CD4-positive, alpha-beta memory T cell (primary cell): ENCODE measurements at regions of chr1 and their contacts with region 1.

Region 1: GRCh38 chr1:44786138-44786840 is 1.7 kb downstream of the BEST4 start:
- DNase-seq: peak; percentile 72 to 84 (median 80)
- H3K4me3 ChIP-seq: peak overlapping the region; percentile 52 to 68
- H3K4me3 Mint-ChIP-seq: peak overlapping the region; percentile 73 to 83 (median 80)
- H3K27ac ChIP-seq: peak overlapping the region; percentile 53
- H3K27ac Mint-ChIP-seq: peak overlapping the region; percentile 41 to 95 (median 88)
- H3K4me1 ChIP-seq: peaks cover 39% of the 10 kb centered on the region
- H3K4me1 Mint-ChIP-seq: peaks cover 22 to 37% (median 28%) of the 10 kb centered on the region in 4 donors
- H3K27me3 ChIP-seq: no peaks in the 10 kb centered on the region
- H3K27me3 Mint-ChIP-seq: no peaks in the 10 kb centered on the region

Region 2: DNA sequence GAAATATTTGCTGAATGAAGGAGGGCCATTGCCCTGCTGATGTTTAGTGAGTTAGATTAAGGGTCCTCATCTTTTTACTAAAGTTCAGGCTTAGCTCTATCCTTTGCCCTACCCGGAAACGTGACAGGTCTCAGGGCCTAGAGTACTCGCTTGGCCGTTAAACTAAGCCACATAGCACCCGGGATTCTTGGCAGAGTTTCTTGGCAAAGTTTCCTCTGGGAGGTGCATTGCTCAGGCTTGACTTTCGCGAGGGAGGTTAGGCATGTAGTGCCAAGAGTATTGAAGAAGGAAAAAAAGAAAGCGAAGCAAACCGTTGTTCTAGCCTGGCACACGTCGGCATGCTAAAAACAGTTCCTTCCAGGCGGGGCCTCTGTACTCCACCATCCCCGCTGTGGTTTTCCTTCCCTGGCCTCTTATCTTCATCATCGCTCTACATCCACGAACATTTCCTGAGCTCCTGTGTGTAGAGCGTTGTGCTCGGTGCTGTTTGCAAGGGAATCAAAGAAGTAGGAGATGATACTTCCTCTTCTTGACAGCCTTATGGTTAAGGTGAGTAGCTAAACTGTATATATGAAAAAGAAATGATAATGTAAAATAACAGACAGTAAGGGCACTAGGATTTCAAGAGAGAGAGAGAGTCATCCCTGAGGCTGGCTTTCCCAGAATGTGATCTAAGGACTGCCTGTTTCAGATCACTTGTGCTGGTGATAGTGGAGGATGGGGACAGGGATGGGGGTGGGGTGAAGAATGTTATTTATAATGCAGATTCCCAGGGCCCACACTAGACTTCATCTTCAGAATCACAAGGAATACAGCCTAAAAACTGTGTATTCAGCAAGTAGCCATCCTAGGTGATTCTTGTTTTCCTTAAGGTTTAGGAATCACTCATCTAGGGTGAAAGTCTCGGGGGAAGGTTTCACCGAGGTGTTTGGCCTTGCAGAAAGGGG is 362.4 kb before region 1 on chr1:
- CTCF ChIA-PET with region 1: no interaction called
- POLR2A ChIA-PET with region 1: no interaction called
- intact Hi-C with region 1: no loop called
- DNase-seq: no peak
- H3K4me3 ChIP-seq: no peak overlapping the region
- H3K4me3 Mint-ChIP-seq: peak overlapping the region in 2 of 8 donors; percentile 23 to 49
- H3K27ac ChIP-seq: no peak overlapping the region
- H3K27ac Mint-ChIP-seq: peak overlapping the region in 1 of 7 donors; percentile 88
- H3K4me1 ChIP-seq: no peaks in the 10 kb centered on the region
- H3K4me1 Mint-ChIP-seq: peaks cover 0 to 6% (median 5%) of the 10 kb centered on the region in 4 donors
- H3K27me3 ChIP-seq: peaks cover 7% of the 10 kb centered on the region
- H3K27me3 Mint-ChIP-seq: peaks cover 50 to 62% of the 10 kb centered on the region in 2 donors

Region 3: GRCh38 chr1:44799770-44800584 is 13.7 kb after region 1 on chr1 and contains the start of gene PLK3:
- CTCF ChIA-PET with region 1: interaction called, 10 read pairs
- POLR2A ChIA-PET with region 1: interaction called, 51 read pairs
- intact Hi-C with region 1: no loop called
- DNase-seq: peak; percentile 99 to 100 (median 99)
- H3K4me3 ChIP-seq: peak within 1 kb of the TSS; percentile 77 to 83
- H3K4me3 Mint-ChIP-seq: peak within 1 kb of the TSS; percentile 89 to 99 (median 96)
- H3K27ac ChIP-seq: peak within 1 kb of the TSS; percentile 96
- H3K27ac Mint-ChIP-seq: peak within 1 kb of the TSS; percentile 82 to 100 (median 99)
- H3K4me1 ChIP-seq: peaks cover 37% of the 10 kb centered on the region
- H3K4me1 Mint-ChIP-seq: peaks cover 23 to 48% (median 31%) of the 10 kb centered on the region in 4 donors
- H3K27me3 ChIP-seq: no peaks in the 10 kb centered on the region
- H3K27me3 Mint-ChIP-seq: no peaks in the 10 kb centered on the region
- total RNA-seq, gene PLK3: 151 to 153 TPM

Region 4: DNA sequence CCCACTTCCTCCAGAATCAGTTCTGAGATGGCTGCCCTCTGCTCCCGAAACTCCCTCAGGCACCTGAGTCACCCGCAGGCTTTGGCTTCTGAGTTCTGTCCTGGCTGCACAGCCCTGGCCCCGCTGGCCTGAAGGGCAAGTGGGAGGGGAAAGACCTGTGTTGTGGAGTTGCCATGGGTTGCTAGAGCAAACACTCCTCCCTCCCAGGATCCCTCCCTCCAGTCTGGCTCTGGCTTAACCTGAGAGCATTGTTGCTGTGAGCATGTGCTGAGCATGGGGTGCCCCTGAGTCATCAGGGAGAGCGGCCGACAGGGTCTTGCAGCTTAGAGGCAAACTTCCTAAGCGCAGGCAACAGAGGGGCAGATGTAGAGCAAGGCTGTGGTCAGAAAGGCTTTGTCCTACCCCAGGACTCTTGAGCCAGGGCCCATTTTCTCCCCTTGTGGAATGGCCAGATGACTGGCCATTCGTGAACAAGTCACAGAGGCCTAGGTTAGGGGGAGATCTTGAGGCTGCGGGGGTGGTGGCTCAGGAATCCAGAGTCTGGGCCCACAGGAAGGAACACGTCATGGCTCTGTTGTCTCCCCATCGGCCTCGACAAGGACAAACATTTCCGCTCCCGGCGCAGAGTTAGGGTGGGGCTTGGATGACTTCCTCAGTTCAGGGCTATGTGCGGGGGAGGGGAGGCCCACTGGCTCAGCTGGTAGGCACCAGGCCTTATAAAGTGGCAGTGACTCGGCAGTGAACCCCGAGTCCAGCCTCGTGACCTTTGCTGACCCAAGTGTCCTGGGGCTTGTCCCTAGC is 21.2 kb after region 1 on chr1 and contains the start of gene DYNLT4:
- CTCF ChIA-PET with region 1: interaction called, 15 read pairs
- POLR2A ChIA-PET with region 1: interaction called, 66 read pairs
- intact Hi-C with region 1: no loop called
- DNase-seq: peak; percentile 91 to 98 (median 91)
- H3K4me3 ChIP-seq: peak within 1 kb of the TSS; percentile 41 to 57
- H3K4me3 Mint-ChIP-seq: peak within 1 kb of the TSS; percentile 74 to 87 (median 80)
- H3K27ac ChIP-seq: peak within 1 kb of the TSS; percentile 98
- H3K27ac Mint-ChIP-seq: peak within 1 kb of the TSS; percentile 98 to 100 (median 99)
- H3K4me1 ChIP-seq: peaks cover 91% of the 10 kb centered on the region
- H3K4me1 Mint-ChIP-seq: peaks cover 57 to 94% (median 73%) of the 10 kb centered on the region in 4 donors
- H3K27me3 ChIP-seq: no peaks in the 10 kb centered on the region
- H3K27me3 Mint-ChIP-seq: no peaks in the 10 kb centered on the region
- total RNA-seq, gene DYNLT4: 0.47 TPM in 1 of 2 experiments, not detected in the other

Region 5: GRCh38 chr1:44812822-44813543 is 26.7 kb after region 1 on chr1:
- CTCF ChIA-PET with region 1: interaction called, 15 read pairs
- POLR2A ChIA-PET with region 1: interaction called, 66 read pairs
- intact Hi-C with region 1: no loop called
- DNase-seq: no peak
- H3K4me3 ChIP-seq: peak overlapping the region in 1 of 2 donors; percentile 54
- H3K4me3 Mint-ChIP-seq: peak overlapping the region; percentile 21 to 93 (median 64)
- H3K27ac ChIP-seq: peak overlapping the region; percentile 64
- H3K27ac Mint-ChIP-seq: peak overlapping the region; percentile 82 to 100 (median 99)
- H3K4me1 ChIP-seq: peaks cover 68% of the 10 kb centered on the region
- H3K4me1 Mint-ChIP-seq: peaks cover 43 to 80% (median 62%) of the 10 kb centered on the region in 4 donors
- H3K27me3 ChIP-seq: no peaks in the 10 kb centered on the region
- H3K27me3 Mint-ChIP-seq: no peaks in the 10 kb centered on the region

Region 6: GRCh38 chr1:44835738-44836675 is 49.7 kb after region 1 on chr1:
- CTCF ChIA-PET with region 1: interaction called, 14 read pairs
- POLR2A ChIA-PET with region 1: interaction called, 3 read pairs
- intact Hi-C with region 1: loop called (anchors 2 kb)
- DNase-seq: peak; percentile 71 to 83 (median 75)
- H3K4me3 ChIP-seq: no peak overlapping the region
- H3K4me3 Mint-ChIP-seq: peak overlapping the region in 4 of 8 donors; percentile 19 to 69 (median 42)
- H3K27ac ChIP-seq: no peak overlapping the region
- H3K27ac Mint-ChIP-seq: peak overlapping the region in 6 of 7 donors; percentile 7 to 74 (median 58)
- H3K4me1 ChIP-seq: peaks cover 4% of the 10 kb centered on the region
- H3K4me1 Mint-ChIP-seq: peaks cover 5 to 9% (median 8%) of the 10 kb centered on the region in 4 donors
- H3K27me3 ChIP-seq: no peaks in the 10 kb centered on the region
- H3K27me3 Mint-ChIP-seq: peaks cover 5 to 10% of the 10 kb centered on the region in 2 donors

Region 7: DNA sequence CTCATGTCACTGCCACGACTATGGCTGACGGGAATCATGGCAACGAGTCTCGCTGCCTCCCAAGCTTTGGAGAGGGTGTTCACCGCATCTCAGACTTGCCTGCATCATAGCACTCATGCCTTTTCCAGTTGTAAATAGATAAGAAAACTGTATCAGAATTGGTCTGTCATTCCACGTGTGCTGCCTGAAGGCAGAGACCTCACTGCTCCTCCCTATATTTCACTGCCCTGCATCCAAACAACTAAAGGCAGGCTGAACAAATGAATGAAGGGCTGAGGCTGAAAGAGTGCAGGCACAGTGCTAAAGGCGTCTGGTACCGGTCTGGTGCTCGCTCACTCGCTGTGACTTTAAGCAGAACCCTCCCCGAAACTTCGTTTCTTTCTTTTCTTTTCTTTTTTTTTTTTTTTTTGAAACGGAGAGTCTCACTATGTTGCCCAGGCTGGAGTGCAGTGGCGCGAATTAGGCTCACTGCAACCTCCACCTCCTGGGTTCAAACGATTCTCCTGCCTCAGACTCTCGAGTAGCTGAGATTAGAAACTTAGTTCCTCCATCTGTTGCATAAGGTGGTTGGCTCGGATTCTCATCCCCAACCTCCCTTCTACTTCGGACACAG is 199.6 kb after region 1 on chr1:
- CTCF ChIA-PET with region 1: interaction called, 6 read pairs
- POLR2A ChIA-PET with region 1: interaction called, 17 read pairs
- intact Hi-C with region 1: loop called (anchors 5 kb)
- DNase-seq: no peak
- H3K4me3 ChIP-seq: peak overlapping the region; percentile 67 to 70
- H3K4me3 Mint-ChIP-seq: peak overlapping the region; percentile 98 to 100 (median 99)
- H3K27ac ChIP-seq: peak overlapping the region; percentile 59
- H3K27ac Mint-ChIP-seq: peak overlapping the region; percentile 34 to 99 (median 96)
- H3K4me1 ChIP-seq: peaks cover 11% of the 10 kb centered on the region
- H3K4me1 Mint-ChIP-seq: peaks cover 15 to 26% (median 21%) of the 10 kb centered on the region in 4 donors
- H3K27me3 ChIP-seq: no peaks in the 10 kb centered on the region
- H3K27me3 Mint-ChIP-seq: no peaks in the 10 kb centered on the region